ENCODE measurements at regions of chr2 and their contacts with region 1.

Region 1: GRCh38 chr2:65377556-65378192 is 54.7 kb downstream of the SPRED2 start:
- DNase-seq: peak; percentile 43 to 59
- H3K4me3 ChIP-seq: no peak overlapping the region
- H3K4me3 Mint-ChIP-seq: no peak overlapping the region
- H3K27ac Mint-ChIP-seq: peak overlapping the region; percentile 25
- H3K4me1 ChIP-seq: peaks cover 60% of the 10 kb centered on the region
- H3K4me1 Mint-ChIP-seq: peaks cover 62% of the 10 kb centered on the region
- H3K27me3 ChIP-seq: no peaks in the 10 kb centered on the region
- H3K27me3 Mint-ChIP-seq: no peaks in the 10 kb centered on the region
- CTCF ChIP-seq: no peak

Region 2: DNA sequence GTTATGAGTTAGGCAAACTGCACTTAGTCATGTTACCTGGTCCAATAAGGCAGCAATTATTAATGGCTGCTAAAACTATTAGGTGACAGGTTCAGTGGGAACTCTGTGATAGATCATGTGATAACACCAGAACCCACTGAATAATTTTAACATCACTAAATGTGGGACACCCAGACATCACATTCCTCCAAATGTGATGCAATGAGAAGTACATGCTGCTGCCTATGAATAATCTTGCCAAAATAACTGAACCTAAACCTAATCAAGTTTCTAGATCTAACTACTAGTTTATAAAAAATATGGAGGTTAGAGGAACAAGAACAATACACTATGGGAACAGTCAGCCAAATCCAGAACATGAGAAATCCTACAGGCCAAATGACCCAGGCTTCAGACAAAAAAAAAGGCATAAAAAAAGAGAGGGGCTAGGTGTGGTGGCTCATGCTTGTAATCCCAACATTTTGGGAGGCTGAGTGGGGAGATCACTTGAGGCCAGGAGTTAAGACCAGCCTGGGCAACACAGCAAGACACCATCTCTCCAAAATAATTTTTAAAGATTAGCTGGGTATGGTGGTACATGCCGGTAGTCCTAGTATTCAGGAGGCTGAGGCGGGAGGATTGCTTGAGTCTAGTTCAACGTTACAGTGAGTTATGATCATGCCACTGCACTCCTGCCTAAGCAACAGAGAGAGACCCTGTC is 157.1 kb before region 1 on chr2:
- CTCF ChIA-PET with region 1: no interaction called
- POLR2A ChIA-PET with region 1: no interaction called
- intact Hi-C with region 1: no loop called
- DNase-seq: no peak
- H3K4me3 ChIP-seq: no peak overlapping the region
- H3K4me3 Mint-ChIP-seq: no peak overlapping the region
- H3K27ac Mint-ChIP-seq: no peak overlapping the region
- H3K4me1 ChIP-seq: 0 out of 2 replicates have a peak, but pooled peaks cover 4% of the 10 kb centered on the region
- H3K4me1 Mint-ChIP-seq: peaks cover 6% of the 10 kb centered on the region
- H3K27me3 ChIP-seq: no peaks in the 10 kb centered on the region
- H3K27me3 Mint-ChIP-seq: no peaks in the 10 kb centered on the region
- CTCF ChIP-seq: no peak

Region 3: DNA sequence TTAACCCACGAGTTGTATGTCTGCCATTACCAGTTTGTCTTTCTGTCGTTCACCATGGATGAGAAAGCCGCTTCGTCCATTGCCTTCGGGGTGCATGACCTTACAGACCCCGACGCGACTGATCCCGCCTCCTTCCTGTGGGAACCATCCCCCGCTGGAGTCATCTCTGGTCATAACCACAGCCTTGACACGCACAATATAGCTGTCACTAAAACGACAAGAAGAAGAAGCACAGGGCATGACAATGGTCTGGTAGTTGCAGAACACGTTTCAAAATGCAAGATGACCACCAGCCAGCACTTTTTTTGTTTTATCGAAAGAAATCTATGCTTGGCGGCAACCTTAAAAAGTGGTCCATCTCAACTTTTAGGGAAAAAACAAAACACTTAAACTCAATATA is 33.0 kb before region 1 on chr2:
- CTCF ChIA-PET with region 1: interaction called, 14 read pairs
- POLR2A ChIA-PET with region 1: no interaction called
- intact Hi-C with region 1: no loop called
- DNase-seq: no peak
- H3K4me3 ChIP-seq: no peak overlapping the region
- H3K4me3 Mint-ChIP-seq: no peak overlapping the region
- H3K27ac Mint-ChIP-seq: no peak overlapping the region
- H3K4me1 ChIP-seq: peaks cover 9% of the 10 kb centered on the region; the same call in 1 of the 2 replicates
- H3K4me1 Mint-ChIP-seq: peaks cover 13% of the 10 kb centered on the region
- H3K27me3 ChIP-seq: no peaks in the 10 kb centered on the region
- H3K27me3 Mint-ChIP-seq: no peaks in the 10 kb centered on the region
- CTCF ChIP-seq: no peak

Region 4: GRCh38 chr2:65361623-65362022 is 16.1 kb before region 1 on chr2:
- CTCF ChIA-PET with region 1: no interaction called
- POLR2A ChIA-PET with region 1: interaction called, 3 read pairs
- intact Hi-C with region 1: loop called (anchors 1 kb)
- DNase-seq: no peak
- H3K4me3 ChIP-seq: no peak overlapping the region
- H3K4me3 Mint-ChIP-seq: peak overlapping the region; percentile 40
- H3K27ac Mint-ChIP-seq: peak overlapping the region; percentile 57
- H3K4me1 ChIP-seq: peaks cover 68% of the 10 kb centered on the region
- H3K4me1 Mint-ChIP-seq: peaks cover 50% of the 10 kb centered on the region
- H3K27me3 ChIP-seq: no peaks in the 10 kb centered on the region
- H3K27me3 Mint-ChIP-seq: no peaks in the 10 kb centered on the region
- CTCF ChIP-seq: no peak

Region 5: DNA sequence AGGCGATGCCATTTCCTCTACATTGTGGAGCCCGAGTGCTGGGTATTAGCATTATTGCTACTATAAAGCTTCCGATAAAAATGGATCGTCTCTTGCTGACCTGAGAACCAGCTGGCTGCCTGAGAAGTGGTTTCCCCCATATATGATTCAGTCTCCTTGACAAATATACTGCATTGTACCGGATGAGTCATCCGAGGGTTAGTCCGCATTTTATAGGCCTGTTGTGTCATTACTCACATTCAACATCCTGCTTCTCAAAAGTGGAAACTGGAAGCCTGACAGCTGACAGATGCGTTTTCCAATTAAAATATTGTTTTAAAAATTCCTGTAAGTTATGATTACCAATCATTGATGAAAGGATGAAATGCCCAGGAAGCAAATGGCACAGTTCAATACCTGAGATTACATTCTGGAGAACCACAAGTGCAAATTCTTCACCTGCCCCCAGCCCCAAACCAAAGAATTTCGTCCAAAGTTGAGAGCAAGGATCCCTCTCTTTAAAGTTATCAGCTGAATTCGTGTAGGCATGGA is 11.0 kb before region 1 on chr2:
- CTCF ChIA-PET with region 1: no interaction called
- POLR2A ChIA-PET with region 1: interaction called, 3 read pairs
- intact Hi-C with region 1: loop called (anchors 1 kb)
- DNase-seq: peak; percentile 56 to 69
- H3K4me3 ChIP-seq: no peak overlapping the region
- H3K4me3 Mint-ChIP-seq: no peak overlapping the region
- H3K27ac Mint-ChIP-seq: peak overlapping the region; percentile 77
- H3K4me1 ChIP-seq: peaks cover 59% of the 10 kb centered on the region
- H3K4me1 Mint-ChIP-seq: peaks cover 61% of the 10 kb centered on the region
- H3K27me3 ChIP-seq: no peaks in the 10 kb centered on the region
- H3K27me3 Mint-ChIP-seq: no peaks in the 10 kb centered on the region
- CTCF ChIP-seq: no peak

Region 6: GRCh38 chr2:65420712-65421431 is 43.2 kb after region 1 on chr2:
- CTCF ChIA-PET with region 1: no interaction called
- POLR2A ChIA-PET with region 1: no interaction called
- intact Hi-C with region 1: loop called (anchors 2 kb)
- DNase-seq: peak; percentile 53 to 66
- H3K4me3 ChIP-seq: no peak overlapping the region
- H3K4me3 Mint-ChIP-seq: peak overlapping the region; percentile 65
- H3K27ac Mint-ChIP-seq: peak overlapping the region; percentile 81
- H3K4me1 ChIP-seq: peaks cover 43% of the 10 kb centered on the region
- H3K4me1 Mint-ChIP-seq: peaks cover 61% of the 10 kb centered on the region
- H3K27me3 ChIP-seq: no peaks in the 10 kb centered on the region
- H3K27me3 Mint-ChIP-seq: no peaks in the 10 kb centered on the region
- CTCF ChIP-seq: no peak